GM12878 (cell line): ENCODE measurements at regions of chr2 and their contacts with region 1.

Region 1: DNA sequence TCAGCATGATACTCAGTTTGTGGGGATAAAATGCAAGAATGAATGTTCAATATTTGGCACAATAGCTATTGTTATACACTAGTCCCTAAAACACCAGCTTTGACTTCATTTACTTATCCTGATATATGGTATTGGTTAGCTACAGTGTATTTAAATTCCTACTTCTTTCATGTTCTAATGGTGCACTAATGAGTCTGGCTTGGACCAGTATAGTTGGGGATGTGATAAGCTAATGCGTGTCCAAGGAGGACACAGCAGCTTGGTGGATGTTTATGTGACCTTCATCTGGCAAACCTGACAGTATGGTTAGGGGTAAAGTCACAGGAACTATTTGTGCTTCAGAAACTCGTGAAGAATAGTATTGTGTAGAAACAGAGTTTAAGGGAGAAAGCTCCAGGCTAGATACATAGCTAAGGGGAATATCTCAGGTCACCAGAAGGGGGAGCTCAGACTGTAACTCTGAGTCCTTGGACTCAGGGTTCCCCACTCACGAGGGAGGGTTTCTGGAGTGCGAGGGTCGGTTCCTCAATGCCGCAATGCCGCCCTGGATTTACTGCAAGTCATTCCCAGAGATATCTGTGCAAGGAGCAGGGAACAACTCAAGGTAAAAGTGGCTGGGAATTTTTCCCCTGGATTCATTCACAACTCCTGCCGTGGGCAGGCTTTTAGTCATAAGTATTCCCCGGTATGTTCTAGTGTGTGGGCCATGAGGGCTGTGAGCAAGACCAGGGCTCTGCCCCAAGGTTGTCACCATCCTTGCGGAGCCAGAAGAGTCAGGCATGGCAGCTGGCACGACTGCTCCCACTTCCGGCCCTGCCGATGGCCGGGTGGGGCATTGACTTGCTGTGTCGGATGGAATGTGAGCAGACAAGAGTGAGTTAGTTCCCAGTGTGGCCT is 14.5 kb downstream of the IL1R2 start:
- DNase-seq: no peak
- ATAC-seq: peak; percentile 82
- H3K4me3 ChIP-seq: no peak overlapping the region
- H3K27ac ChIP-seq: no peak overlapping the region
- H3K4me1 ChIP-seq: peaks cover 3% of the 10 kb centered on the region; the same call in 1 of the 2 replicates
- H3K27me3 ChIP-seq: no peaks in the 10 kb centered on the region; a peak in 1 of 4 replicates
- CTCF ChIP-seq: peak; percentile 63 to 73 (median 69)
- EP300 ChIP-seq: no peak
- POLR2A ChIP-seq: no peak
- RAD21 ChIP-seq: peak; percentile 51

Region 2: GRCh38 chr2:101993772-101994171 is 12.5 kb before region 1 on chr2:
- CTCF ChIA-PET with region 1: interaction called, 36 read pairs
- POLR2A ChIA-PET with region 1: interaction called, 3 read pairs
- RAD21 ChIA-PET with region 1: interaction called, 10 read pairs
- SMC1A ChIA-PET with region 1: interaction called, 34 read pairs
- in situ Hi-C with region 1: no loop called
- intact Hi-C with region 1: no loop called
- DNase-seq: no peak
- ATAC-seq: no peak
- H3K4me3 ChIP-seq: no peak overlapping the region
- H3K27ac ChIP-seq: no peak overlapping the region
- H3K4me1 ChIP-seq: peaks cover 2% of the 10 kb centered on the region; the same call in 1 of the 2 replicates
- H3K27me3 ChIP-seq: peaks cover 0 to 7% of the 10 kb centered on the region in 2 experiments; a peak in 3 of 4 replicates
- CTCF ChIP-seq: no peak
- EP300 ChIP-seq: no peak
- POLR2A ChIP-seq: no peak
- RAD21 ChIP-seq: no peak

Region 3: GRCh38 chr2:102166189-102166845 is 160.1 kb after region 1 on chr2:
- CTCF ChIA-PET with region 1: interaction called, 27 read pairs
- POLR2A ChIA-PET with region 1: no interaction called
- RAD21 ChIA-PET with region 1: interaction called, 6 read pairs
- SMC1A ChIA-PET with region 1: interaction called, 4 read pairs
- in situ Hi-C with region 1: no loop called
- intact Hi-C with region 1: no loop called
- DNase-seq: no peak
- ATAC-seq: no peak
- H3K4me3 ChIP-seq: no peak overlapping the region
- H3K27ac ChIP-seq: no peak overlapping the region
- H3K4me1 ChIP-seq: no peaks in the 10 kb centered on the region
- H3K27me3 ChIP-seq: no peaks in the 10 kb centered on the region
- CTCF ChIP-seq: peak in 1 of 3 experiments; percentile 37; a peak in 2 of 6 replicates
- EP300 ChIP-seq: no peak
- POLR2A ChIP-seq: no peak
- RAD21 ChIP-seq: 0 out of 2 replicates have a peak, but pooled peaks have one; percentile 11

Region 4: DNA sequence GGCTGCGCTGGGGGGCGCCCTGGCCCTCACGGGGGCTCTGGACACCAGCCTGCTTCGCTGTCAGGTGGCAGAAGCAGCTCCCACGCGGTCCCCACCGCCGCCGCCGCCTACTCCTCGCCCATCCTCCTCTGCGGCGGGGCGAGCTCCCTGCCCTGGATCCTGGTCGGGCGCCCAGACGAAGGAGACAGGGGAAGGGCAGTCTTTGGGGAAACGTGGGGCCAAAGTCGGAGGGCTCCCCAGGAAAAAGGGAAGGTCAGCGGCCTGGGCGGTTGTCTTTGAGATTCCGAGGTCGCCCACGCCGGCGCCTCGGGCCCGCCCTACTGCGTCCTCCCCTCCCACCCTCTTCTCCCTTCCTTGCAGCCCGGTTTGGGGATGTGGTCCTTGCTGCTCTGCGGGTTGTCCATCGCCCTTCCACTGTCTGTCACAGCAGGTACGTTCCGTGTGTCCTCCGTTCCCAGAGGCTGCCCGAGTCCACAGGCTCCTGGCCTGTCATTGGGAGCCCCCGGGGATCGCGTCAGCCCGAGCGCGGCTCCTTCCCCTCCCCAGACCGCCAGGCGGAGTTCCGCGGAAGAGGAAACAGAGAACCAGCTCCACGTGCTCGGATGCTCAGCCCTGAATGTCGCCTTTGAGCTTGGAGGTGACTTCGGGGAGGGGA is 181.4 kb after region 1 on chr2:
- CTCF ChIA-PET with region 1: no interaction called
- POLR2A ChIA-PET with region 1: no interaction called
- RAD21 ChIA-PET with region 1: no interaction called
- SMC1A ChIA-PET with region 1: no interaction called
- in situ Hi-C with region 1: no loop called
- intact Hi-C with region 1: no loop called
- DNase-seq: no peak
- ATAC-seq: no peak
- H3K4me3 ChIP-seq: no peak overlapping the region
- H3K27ac ChIP-seq: no peak overlapping the region
- H3K4me1 ChIP-seq: no peaks in the 10 kb centered on the region
- H3K27me3 ChIP-seq: no peaks in the 10 kb centered on the region; a peak in 2 of 4 replicates
- CTCF ChIP-seq: no peak
- EP300 ChIP-seq: no peak
- POLR2A ChIP-seq: no peak
- RAD21 ChIP-seq: no peak

Region 5: DNA sequence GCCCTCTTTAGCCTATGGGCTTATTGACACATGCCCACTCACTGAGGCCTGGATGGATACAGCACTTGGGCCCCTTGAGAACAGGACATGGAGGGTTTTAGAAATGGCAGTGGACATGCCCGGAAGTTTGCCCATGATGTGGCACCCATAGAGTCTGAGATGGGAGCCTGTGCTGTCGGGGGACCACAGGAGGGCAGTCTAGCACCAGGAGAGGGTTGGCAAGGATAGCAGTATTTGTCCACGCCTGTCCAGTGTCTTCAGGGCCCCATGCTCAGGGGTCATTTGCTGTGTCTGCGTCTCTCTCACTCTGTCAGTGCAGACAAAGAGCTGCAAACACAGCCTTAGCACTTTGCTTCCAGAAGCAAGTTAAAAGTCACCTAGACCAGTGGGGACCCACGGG is 229.3 kb after region 1 on chr2:
- CTCF ChIA-PET with region 1: interaction called, 168 read pairs
- POLR2A ChIA-PET with region 1: interaction called, 7 read pairs
- RAD21 ChIA-PET with region 1: interaction called, 124 read pairs
- SMC1A ChIA-PET with region 1: interaction called, 119 read pairs
- in situ Hi-C with region 1: no loop called
- intact Hi-C with region 1: loop called (anchors 1 kb)
- DNase-seq: no peak
- ATAC-seq: peak; percentile 46
- H3K4me3 ChIP-seq: no peak overlapping the region
- H3K27ac ChIP-seq: no peak overlapping the region
- H3K4me1 ChIP-seq: peaks cover 10% of the 10 kb centered on the region; the same call in 1 of the 2 replicates
- H3K27me3 ChIP-seq: no peaks in the 10 kb centered on the region
- CTCF ChIP-seq: peak in 2 of 3 experiments; percentile 27 to 36; a peak in 2 of 6 replicates
- EP300 ChIP-seq: no peak
- POLR2A ChIP-seq: no peak
- RAD21 ChIP-seq: peak; percentile 59

Region 6: DNA sequence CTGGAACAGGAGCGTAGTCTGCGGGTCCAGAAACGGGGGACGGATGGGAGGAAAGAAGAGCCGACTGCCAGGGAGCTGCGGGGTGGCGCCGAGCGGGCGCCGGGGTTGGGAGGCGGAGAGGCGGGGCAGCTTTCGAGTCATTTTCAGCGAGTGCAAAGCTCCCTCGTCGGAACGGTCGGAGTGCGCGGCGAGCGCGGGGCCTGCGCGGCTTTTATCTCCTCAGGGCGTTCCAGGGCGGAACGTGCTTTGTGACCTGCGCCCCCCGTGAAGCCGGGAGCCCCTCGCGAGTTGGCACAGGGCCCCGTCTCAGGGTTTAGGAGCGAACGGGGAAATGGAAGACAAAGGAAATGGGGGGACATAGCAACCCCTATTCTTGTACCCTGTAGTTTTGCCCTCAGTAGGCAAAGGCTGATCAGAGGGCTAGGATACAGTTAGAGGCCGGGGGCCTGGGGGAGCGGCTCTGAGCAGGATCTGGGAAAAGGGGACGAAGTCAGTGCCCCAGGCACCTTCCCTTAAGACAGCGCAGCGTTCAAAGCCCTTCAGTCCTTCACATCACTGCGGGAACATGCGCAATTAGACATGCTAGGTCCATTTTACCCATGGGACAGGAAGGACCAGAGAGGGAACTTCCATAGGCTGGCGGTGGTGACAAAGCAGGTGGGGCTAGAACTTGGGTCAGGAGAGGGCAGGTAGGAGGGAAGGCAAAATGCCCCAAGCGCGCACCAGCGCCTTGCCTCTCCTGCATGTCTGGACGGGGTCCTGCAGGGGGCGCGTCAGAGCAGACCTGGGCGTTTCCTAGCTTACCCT is 245.0 kb after region 1 on chr2:
- CTCF ChIA-PET with region 1: interaction called, 29 read pairs
- POLR2A ChIA-PET with region 1: no interaction called
- RAD21 ChIA-PET with region 1: interaction called, 3 read pairs
- SMC1A ChIA-PET with region 1: interaction called, 9 read pairs
- in situ Hi-C with region 1: no loop called
- intact Hi-C with region 1: no loop called
- DNase-seq: no peak
- ATAC-seq: peak; percentile 80
- H3K4me3 ChIP-seq: no peak overlapping the region
- H3K27ac ChIP-seq: no peak overlapping the region
- H3K4me1 ChIP-seq: no peaks in the 10 kb centered on the region
- H3K27me3 ChIP-seq: no peaks in the 10 kb centered on the region; a peak in 1 of 4 replicates
- CTCF ChIP-seq: peak; percentile 58 to 63 (median 60)
- EP300 ChIP-seq: no peak
- POLR2A ChIP-seq: no peak
- RAD21 ChIP-seq: 0 out of 2 replicates have a peak, but pooled peaks have one; percentile 25

Region 7: DNA sequence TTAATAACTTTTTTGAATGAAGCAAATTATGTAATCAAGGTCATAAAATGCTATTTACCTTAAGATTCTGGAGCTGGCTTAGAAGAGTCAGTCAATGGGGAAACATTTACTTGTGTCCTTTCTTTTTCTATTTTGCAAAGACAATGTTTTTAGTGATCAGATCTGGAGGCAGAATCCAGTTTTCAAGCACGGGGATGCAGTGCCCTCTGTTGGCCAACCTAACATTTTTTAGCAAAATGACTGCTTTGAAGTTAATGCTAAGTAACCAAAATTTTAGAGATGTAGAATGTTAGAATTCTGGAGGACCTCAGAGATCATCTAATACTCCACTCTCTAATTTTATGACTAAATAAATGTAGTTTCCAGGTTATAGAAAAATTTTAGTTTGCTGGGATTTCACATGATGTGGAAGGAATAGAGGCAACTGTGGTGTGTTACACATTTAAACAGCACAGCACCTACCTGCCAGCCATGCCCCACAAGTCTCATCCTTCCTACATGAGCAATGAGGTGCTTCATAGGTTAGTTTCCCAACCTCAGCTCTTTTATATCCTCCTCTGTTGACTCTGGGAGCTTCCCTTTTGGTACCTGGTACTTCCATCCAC is 443.2 kb after region 1 on chr2:
- CTCF ChIA-PET with region 1: interaction called, 4 read pairs
- POLR2A ChIA-PET with region 1: no interaction called
- RAD21 ChIA-PET with region 1: interaction called, 3 read pairs
- SMC1A ChIA-PET with region 1: interaction called, 7 read pairs
- in situ Hi-C with region 1: no loop called
- intact Hi-C with region 1: loop called (anchors 5 kb)
- DNase-seq: no peak
- ATAC-seq: peak; percentile 78
- H3K4me3 ChIP-seq: no peak overlapping the region
- H3K27ac ChIP-seq: no peak overlapping the region
- H3K4me1 ChIP-seq: no peaks in the 10 kb centered on the region
- H3K27me3 ChIP-seq: no peaks in the 10 kb centered on the region
- CTCF ChIP-seq: peak; percentile 49 to 79 (median 58); a peak in 5 of 6 replicates
- EP300 ChIP-seq: no peak
- POLR2A ChIP-seq: no peak
- RAD21 ChIP-seq: peak; percentile 87